PC-9 (cell line): ENCODE measurements at regions of chr5 and their contacts with region 1.

Region 1: DNA sequence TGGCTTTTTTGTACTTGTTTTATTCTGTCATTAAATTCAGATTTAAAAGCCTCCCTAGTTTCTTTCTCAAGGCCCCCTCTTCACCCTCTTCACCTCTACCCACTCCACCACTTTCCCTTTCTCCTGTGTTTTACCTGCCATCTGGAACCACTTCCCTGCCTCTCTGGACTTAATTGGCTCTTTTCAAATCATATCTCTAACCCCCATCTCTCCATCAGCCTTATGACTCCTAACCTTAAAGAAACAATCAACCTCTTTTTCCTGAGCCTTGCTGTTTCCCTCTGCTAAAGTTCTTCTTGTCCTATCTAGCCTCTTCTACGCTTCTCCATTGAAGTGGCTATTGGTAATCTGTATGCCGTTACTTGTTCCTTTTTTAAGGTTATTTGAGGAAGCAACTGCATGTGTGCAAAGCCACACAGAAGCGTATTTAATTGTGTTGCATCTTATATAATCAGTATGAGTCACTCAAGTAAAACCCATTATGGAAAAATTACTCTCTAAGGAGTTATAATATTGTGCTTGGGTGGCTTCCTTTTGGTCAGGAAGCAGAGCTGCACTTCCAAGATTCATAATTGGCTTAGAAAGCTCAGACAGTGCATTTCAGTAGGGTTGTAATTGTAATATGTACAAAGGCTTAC is 653.6 kb upstream of the ITGA1 start:
- DNase-seq: no peak
- H3K4me3 ChIP-seq: no peak overlapping the region
- H3K27ac ChIP-seq: no peak overlapping the region
- H3K4me1 ChIP-seq: no peaks in the 10 kb centered on the region
- H3K27me3 ChIP-seq: no peaks in the 10 kb centered on the region
- CTCF ChIP-seq: no peak

Region 2: GRCh38 chr5:51104556-51104955 is 1029.6 kb before region 1 on chr5:
- CTCF ChIA-PET with region 1: no interaction called
- POLR2A ChIA-PET with region 1: no interaction called
- intact Hi-C with region 1: no loop called
- DNase-seq: no peak
- H3K4me3 ChIP-seq: no peak overlapping the region
- H3K27ac ChIP-seq: no peak overlapping the region
- H3K4me1 ChIP-seq: no peaks in the 10 kb centered on the region
- H3K27me3 ChIP-seq: no peaks in the 10 kb centered on the region
- CTCF ChIP-seq: no peak

Region 3: GRCh38 chr5:51599587-51599986 is 534.5 kb before region 1 on chr5:
- CTCF ChIA-PET with region 1: no interaction called
- POLR2A ChIA-PET with region 1: no interaction called
- intact Hi-C with region 1: no loop called
- DNase-seq: no peak
- H3K4me3 ChIP-seq: no peak overlapping the region
- H3K27ac ChIP-seq: no peak overlapping the region
- H3K4me1 ChIP-seq: no peaks in the 10 kb centered on the region
- H3K27me3 ChIP-seq: no peaks in the 10 kb centered on the region
- CTCF ChIP-seq: no peak

Region 4: DNA sequence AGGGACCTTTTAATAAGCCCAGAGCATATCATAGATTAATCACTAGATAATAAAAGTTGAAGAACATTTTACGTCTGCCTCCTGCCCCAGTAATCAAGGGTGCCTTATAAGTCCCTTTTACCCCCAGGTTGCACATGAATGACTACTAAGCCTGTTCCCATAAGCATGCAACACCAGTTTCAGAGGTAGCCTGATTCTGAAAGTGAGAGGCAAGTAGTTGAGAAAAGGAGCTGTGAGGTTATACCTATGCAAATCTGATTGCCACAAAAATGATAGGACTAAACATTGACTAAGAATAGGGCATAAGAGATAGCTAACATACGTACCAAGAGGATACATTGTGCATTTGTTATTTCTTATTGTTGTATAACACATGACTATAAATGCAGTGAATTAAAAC is 69.0 kb before region 1 on chr5:
- CTCF ChIA-PET with region 1: interaction called, 10 read pairs
- POLR2A ChIA-PET with region 1: no interaction called
- intact Hi-C with region 1: no loop called
- DNase-seq: no peak
- H3K4me3 ChIP-seq: no peak overlapping the region
- H3K27ac ChIP-seq: no peak overlapping the region
- H3K4me1 ChIP-seq: no peaks in the 10 kb centered on the region
- H3K27me3 ChIP-seq: no peaks in the 10 kb centered on the region
- CTCF ChIP-seq: no peak

Region 5: GRCh38 chr5:52107210-52107905 is 26.8 kb before region 1 on chr5:
- CTCF ChIA-PET with region 1: no interaction called
- POLR2A ChIA-PET with region 1: no interaction called
- intact Hi-C with region 1: no loop called
- DNase-seq: no peak
- H3K4me3 ChIP-seq: no peak overlapping the region
- H3K27ac ChIP-seq: no peak overlapping the region
- H3K4me1 ChIP-seq: no peaks in the 10 kb centered on the region
- H3K27me3 ChIP-seq: no peaks in the 10 kb centered on the region
- CTCF ChIP-seq: no peak